Dendritic cell treated with granulocyte-macrophage colony-stimulating factor and Interleukin-4, amounts not matched to agents 40 ng/mL and 50 ng/mL, for 4 days (primary cell): ENCODE measurements at regions of chr7 and their contacts with region 1.

Region 1: DNA sequence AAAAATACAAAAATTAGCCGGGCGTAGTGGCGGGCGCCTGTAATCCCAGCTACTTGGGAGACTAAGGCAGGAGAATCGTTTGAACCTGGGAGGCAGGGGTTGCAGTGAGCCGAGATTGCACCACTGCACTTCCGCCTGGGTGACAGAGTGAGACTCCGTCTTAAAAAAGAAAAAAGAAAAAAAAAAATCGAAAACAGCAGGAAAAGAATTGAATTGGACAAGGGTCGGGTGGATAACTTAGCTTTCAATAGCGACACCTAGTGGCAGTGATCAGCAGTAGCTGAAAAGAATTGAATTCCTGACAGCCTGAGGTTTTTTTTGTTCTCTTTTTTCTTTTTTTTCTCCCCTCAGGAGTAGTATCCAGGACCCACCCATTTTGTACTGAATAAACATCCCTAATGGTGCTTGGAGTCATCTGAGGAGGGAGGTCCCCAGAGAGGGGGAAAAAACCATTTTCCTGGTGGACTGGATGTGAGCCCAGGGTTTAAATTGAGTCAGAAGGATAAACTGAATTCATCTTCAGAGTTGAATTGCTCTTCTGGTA is 55.1 kb downstream of the CYCS start:
- H3K4me3 Mint-ChIP-seq: no peak overlapping the region
- H3K27ac Mint-ChIP-seq: no peak overlapping the region
- H3K4me1 Mint-ChIP-seq: peaks cover 13% of the 10 kb centered on the region
- H3K27me3 Mint-ChIP-seq: peaks cover 11% of the 10 kb centered on the region

Region 2: GRCh38 chr7:23700059-23700458 is 1369.9 kb before region 1 on chr7:
- intact Hi-C with region 1: no loop called
- H3K4me3 Mint-ChIP-seq: no peak overlapping the region
- H3K27ac Mint-ChIP-seq: no peak overlapping the region
- H3K4me1 Mint-ChIP-seq: peaks cover 8% of the 10 kb centered on the region
- H3K27me3 Mint-ChIP-seq: no peaks in the 10 kb centered on the region

Region 3: DNA sequence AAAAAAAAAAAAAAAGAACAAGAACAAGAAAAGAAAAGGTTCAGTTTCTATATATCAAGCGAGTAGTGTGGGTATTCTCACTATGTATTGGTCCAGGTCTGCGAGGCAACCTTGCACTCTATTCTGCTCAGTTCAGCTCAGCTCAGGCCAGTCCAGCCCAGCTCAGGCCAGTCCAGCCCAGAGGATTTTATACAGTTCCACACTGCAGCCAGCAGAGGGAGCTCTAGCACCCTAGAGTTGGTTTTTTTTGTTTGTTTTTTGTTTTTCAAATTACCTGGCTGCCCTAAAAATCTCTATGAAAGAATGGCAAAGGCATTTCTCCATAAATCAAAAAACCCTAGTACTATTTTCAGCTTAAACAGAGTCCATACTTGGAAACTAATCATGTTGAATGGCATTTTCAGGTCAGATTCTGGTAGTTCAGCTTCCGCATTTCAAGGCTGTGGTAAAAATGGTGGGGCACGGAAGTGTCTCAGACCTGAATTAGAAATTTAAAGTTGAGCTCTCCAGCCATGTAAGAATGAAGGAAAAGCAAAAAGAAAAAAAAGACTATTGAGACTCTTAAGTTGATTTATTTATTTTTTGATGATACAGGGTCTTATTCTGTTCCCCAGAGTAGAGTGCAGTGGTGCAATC is 257.5 kb before region 1 on chr7:
- intact Hi-C with region 1: loop called (anchors 2 kb)
- H3K4me3 Mint-ChIP-seq: no peak overlapping the region
- H3K27ac Mint-ChIP-seq: no peak overlapping the region
- H3K4me1 Mint-ChIP-seq: no peaks in the 10 kb centered on the region
- H3K27me3 Mint-ChIP-seq: no peaks in the 10 kb centered on the region

Region 4: GRCh38 chr7:24819916-24820689 is 249.9 kb before region 1 on chr7:
- intact Hi-C with region 1: loop called (anchors 1 kb)
- H3K4me3 Mint-ChIP-seq: peak overlapping the region; percentile 10
- H3K27ac Mint-ChIP-seq: peak overlapping the region; percentile 50
- H3K4me1 Mint-ChIP-seq: peaks cover 25% of the 10 kb centered on the region
- H3K27me3 Mint-ChIP-seq: no peaks in the 10 kb centered on the region

Region 5: GRCh38 chr7:24896031-24896501 is 173.9 kb before region 1 on chr7:
- intact Hi-C with region 1: loop called (anchors 10 kb)
- H3K4me3 Mint-ChIP-seq: no peak overlapping the region
- H3K27ac Mint-ChIP-seq: peak overlapping the region; percentile 32
- H3K4me1 Mint-ChIP-seq: peaks cover 55% of the 10 kb centered on the region
- H3K27me3 Mint-ChIP-seq: no peaks in the 10 kb centered on the region

Region 6: GRCh38 chr7:25028370-25029021 is 41.5 kb before region 1 on chr7:
- intact Hi-C with region 1: no loop called
- H3K4me3 Mint-ChIP-seq: no peak overlapping the region
- H3K27ac Mint-ChIP-seq: no peak overlapping the region
- H3K4me1 Mint-ChIP-seq: no peaks in the 10 kb centered on the region
- H3K27me3 Mint-ChIP-seq: peaks cover 13% of the 10 kb centered on the region